ENCODE measurements at regions of chr7 and their contacts with region 1.

Region 1: GRCh38 chr7:54758702-54759592 is at the start of gene SEC61G:
- DNase-seq: peak; percentile 89 to 98
- H3K4me3 ChIP-seq: peak within 1 kb of the TSS; percentile 78 to 92
- H3K27ac ChIP-seq: peak within 1 kb of the TSS; percentile 84 to 86
- H3K4me1 ChIP-seq: peaks cover 0 to 19% of the 10 kb centered on the region in 2 donors
- H3K27me3 ChIP-seq: no peaks in the 10 kb centered on the region
- CTCF ChIP-seq: peak in 1 of 3 experiments; percentile 12
- total RNA-seq, gene SEC61G: 166 TPM

Region 2: GRCh38 chr7:54839538-54840213 is 80.7 kb after region 1 on chr7:
- intact Hi-C with region 1: loop called (anchors 1 kb)
- DNase-seq: peak in 1 of 2 donors; percentile 84
- H3K4me3 ChIP-seq: no peak overlapping the region
- H3K27ac ChIP-seq: no peak overlapping the region
- H3K4me1 ChIP-seq: peaks cover 0 to 30% of the 10 kb centered on the region in 2 donors
- H3K27me3 ChIP-seq: no peaks in the 10 kb centered on the region
- CTCF ChIP-seq: peak; percentile 56 to 70 (median 68)

Region 3: DNA sequence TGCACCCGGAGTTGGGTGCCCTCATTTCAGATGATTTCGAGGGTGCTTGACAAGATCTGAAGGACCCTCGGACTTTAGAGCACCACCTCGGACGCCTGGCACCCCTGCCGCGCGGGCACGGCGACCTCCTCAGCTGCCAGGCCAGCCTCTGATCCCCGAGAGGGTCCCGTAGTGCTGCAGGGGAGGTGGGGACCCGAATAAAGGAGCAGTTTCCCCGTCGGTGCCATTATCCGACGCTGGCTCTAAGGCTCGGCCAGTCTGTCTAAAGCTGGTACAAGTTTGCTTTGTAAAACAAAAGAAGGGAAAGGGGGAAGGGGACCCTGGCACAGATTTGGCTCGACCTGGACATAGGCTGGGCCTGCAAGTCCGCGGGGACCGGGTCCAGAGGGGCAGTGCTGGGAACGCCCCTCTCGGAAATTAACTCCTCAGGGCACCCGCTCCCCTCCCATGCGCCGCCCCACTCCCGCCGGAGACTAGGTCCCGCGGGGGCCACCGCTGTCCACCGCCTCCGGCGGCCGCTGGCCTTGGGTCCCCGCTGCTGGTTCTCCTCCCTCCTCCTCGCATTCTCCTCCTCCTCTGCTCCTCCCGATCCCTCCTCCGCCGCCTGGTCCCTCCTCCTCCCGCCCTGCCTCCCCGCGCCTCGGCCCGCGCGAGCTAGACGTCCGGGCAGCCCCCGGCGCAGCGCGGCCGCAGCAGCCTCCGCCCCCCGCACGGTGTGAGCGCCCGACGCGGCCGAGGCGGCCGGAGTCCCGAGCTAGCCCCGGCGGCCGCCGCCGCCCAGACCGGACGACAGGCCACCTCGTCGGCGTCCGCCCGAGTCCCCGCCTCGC is 259.6 kb after region 1 on chr7 and contains the start of gene EGFR:
- intact Hi-C with region 1: loop called (anchors 5 kb)
- DNase-seq: peak; percentile 29 to 91
- H3K4me3 ChIP-seq: peak within 1 kb of the TSS; percentile 88 to 98
- H3K27ac ChIP-seq: peak within 1 kb of the TSS; percentile 97 to 98
- H3K4me1 ChIP-seq: peaks cover 4 to 38% of the 10 kb centered on the region in 2 donors
- H3K27me3 ChIP-seq: no peaks in the 10 kb centered on the region
- CTCF ChIP-seq: no peak
- total RNA-seq, gene EGFR: 33.8 TPM

Region 4: GRCh38 chr7:55887821-55888247 is 1128.9 kb after region 1 on chr7:
- intact Hi-C with region 1: loop called (anchors 10 kb)
- DNase-seq: no peak
- H3K4me3 ChIP-seq: peak overlapping the region; percentile 59 to 75
- H3K27ac ChIP-seq: peak overlapping the region in 1 of 2 donors; percentile 65
- H3K4me1 ChIP-seq: peaks cover 0 to 8% of the 10 kb centered on the region in 2 donors
- H3K27me3 ChIP-seq: no peaks in the 10 kb centered on the region
- CTCF ChIP-seq: no peak

Region 5: DNA sequence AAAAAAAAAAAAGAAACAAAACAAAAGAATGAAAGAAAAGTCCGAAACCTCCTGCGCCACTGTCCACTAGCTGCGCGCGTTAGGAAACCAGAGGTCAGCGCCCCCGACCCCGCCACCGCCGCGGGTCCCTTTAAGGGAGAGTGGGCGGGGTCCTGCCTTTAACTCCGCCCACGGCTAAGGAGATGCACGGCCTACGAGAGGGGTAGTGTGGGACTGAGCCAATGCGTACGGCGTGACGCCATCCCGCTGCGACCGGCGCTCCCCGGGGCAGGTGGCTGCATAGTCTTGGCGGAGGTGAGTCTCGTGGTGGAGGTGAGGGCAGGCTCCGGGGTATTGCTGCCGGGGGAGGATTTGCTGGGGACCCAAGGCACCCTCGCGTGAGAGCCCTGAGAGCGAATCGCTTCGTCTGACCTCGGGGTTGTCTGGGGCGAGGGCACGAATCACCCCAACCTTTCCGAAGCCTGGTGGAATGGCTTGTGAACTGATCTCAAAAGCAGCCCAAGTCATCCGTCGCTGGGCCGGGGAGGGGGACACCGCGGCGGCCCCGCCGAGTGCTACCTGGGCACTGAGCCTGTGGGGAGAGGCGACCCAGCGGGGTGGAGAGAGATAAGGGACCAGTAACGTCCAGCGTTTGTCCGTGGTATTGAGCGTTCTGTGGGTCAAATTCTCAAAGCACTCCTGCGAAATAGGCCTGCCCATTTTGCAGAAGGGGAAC is 1192.8 kb after region 1 on chr7 and contains the start of gene MRPS17:
- intact Hi-C with region 1: loop called (anchors 10 kb)
- DNase-seq: peak; percentile 69 to 93
- H3K4me3 ChIP-seq: peak within 1 kb of the TSS; percentile 88 to 99
- H3K27ac ChIP-seq: peak within 1 kb of the TSS; percentile 85 to 90
- H3K4me1 ChIP-seq: peaks cover 0 to 5% of the 10 kb centered on the region in 2 donors
- H3K27me3 ChIP-seq: no peaks in the 10 kb centered on the region
- CTCF ChIP-seq: no peak
- total RNA-seq, gene MRPS17: 0.43 TPM

Region 6: DNA sequence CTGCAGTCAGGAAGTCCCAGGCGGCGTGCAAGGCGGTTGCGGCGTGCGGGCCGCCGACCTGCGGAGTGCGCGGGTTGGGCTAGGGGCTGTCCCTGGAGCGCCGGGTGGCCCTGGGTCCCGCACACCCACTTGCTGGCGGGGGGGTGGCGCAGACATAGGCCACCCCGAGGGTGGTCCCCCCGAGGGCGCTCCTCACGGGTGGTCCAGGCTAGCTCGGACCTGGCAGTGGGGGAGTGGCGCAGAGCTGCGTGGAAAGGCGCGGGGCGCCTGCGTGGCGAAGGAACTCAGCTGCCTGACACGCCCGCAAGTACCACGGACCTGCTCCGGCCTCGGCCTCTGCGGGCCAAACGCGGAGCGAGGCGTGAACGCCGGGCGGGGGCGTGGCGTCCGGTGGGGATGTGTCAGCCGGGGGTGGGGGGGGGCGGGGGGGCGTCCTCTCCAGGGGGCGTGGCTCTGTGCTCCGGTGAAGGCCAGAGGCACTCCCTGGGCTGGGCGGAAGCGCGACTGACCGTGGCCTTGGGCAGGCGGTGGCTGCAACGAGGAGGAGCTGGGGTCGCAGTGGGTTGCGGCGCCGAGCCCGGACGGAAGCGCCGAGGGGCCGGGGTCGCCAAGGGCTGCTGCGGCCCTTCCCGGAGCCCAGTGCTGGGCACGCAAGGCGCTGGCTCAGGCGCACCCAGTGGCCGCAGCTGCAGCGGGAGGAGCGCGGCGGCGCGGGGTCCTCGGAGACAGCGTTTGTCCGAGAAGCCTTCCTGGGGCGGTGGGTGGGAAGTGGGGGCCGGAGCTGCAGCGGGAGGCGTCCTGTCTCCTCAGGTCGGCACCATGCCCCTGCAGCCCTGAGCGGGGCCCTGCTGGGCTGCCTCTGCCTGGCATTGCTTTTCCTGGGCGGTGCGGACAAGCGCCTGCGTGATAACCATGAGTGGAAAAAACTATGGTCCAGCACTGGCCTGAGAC is 1416.1 kb after region 1 on chr7:
- intact Hi-C with region 1: loop called (anchors 5 kb)
- DNase-seq: peak in 1 of 2 donors; percentile 82
- H3K4me3 ChIP-seq: peak overlapping the region; percentile 69 to 81
- H3K27ac ChIP-seq: peak overlapping the region; percentile 71
- H3K4me1 ChIP-seq: no peaks in the 10 kb centered on the region
- H3K27me3 ChIP-seq: no peaks in the 10 kb centered on the region
- CTCF ChIP-seq: no peak

Measured in ascending aorta (tissue), 2 donors.